ENCODE measurements at regions of chr13 and their contacts with region 1.

Region 1: GRCh38 chr13:110412132-110412914 is 105.2 kb downstream of the COL4A2 start:
- DNase-seq: peak; percentile 63 to 97 (median 82)

Region 2: DNA sequence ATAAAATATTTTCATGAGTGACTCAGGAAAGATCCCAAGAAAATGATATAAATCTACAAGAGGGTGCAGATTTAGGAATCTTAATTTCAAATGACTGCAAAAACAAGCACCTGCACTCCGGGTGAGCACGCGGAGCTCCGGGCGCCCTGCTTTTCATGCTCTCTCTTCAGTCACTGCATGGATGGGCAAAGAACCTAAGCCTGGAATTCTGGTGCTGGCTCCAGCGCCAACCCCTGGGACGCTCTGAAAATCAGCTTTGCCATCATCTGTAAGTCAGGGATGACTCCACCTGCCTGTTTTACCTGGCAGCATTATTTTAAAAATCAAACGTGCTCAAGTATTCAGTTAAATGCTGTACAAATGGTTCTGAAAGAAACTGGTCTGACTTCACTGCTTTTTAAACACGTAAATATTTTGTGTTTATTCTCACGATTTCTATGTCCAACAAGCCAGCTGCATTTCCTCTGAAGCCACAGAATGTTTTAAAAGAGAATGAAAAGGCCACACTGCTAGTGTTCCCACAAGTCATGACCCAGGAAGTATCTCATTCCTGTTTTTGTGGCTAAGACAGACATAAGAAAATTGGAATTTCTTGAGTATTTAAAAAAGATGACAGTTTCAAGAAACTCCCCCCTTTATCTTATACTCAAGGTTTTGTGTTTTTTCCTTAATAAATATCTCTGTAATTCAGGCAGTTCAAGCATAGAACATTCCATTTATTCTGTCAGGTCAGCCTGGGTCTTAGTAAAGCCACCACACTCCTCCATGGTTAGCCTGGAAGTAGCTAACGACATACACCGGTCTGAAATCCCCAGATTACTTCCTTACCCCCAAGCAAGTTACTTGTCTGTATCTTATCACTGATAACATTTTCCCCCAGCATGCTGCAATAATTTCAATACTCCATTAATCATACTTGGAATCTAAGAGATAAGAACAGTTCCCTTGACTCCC is 186.4 kb before region 1 on chr13:
- intact Hi-C with region 1: loop called (anchors 2 kb)
- DNase-seq: no peak

Region 3: GRCh38 chr13:110306960-110307746 is 105.2 kb before region 1 on chr13 and contains the starts of genes COL4A1 and COL4A2:
- intact Hi-C with region 1: loop called (anchors 10 kb)
- DNase-seq: peak in 6 of 10 donors; percentile 26 to 89 (median 70)

Region 4: GRCh38 chr13:110319774-110320509 is 92.4 kb before region 1 on chr13:
- intact Hi-C with region 1: loop called (anchors 5 kb)
- DNase-seq: peak in 1 of 10 donors; percentile 37